ENCODE measurements at regions of chr6 and their contacts with region 1.

Region 1: DNA sequence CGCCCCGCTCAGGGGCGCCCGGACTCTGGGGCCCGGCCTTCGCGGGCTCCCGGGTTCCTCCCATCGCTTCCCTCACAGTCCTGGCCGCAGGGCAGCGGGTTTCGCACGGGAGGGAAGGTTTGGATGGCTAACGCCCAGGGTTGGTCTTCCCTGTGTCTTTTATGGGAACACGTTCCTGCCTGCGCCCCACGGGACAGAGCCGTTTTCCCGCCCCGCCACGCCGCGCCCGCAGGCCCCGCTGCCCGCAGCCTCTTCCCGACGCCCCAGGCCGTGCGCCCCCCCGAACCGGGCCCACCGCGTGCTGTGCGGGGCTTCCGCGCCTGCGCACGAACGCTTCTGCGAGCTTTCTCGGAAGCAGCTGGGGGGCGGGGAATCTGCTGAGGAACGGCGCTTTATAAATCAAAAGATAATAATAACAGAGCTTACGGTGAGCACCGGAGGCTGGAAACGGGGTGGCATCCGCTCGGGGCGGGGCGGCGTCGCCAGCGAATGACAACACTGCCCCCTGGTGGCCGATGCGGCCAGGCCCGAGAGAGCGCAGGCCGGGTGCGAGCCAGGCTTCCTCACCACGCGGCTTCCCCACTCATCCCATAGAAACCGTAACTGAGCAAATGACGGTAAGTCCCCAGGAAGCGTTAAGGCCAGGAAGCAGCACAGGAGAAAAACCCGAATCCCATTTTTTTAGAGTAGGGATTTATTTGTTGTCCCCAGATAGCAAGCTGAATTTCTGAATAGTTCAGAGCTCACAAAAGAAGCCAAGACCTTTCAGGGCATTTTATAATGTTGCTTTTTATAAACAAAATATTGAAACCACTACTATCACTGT is 116.4 kb downstream of the MYLK4 start:
- ATAC-seq: peak; percentile 92 to 99 (median 96)
- H3K4me3 ChIP-seq: peak overlapping the region; percentile 14 to 29 (median 16)
- H3K27ac ChIP-seq: no peak overlapping the region
- H3K4me1 ChIP-seq: peaks cover 0 to 4% of the 10 kb centered on the region in 2 donors

Region 2: DNA sequence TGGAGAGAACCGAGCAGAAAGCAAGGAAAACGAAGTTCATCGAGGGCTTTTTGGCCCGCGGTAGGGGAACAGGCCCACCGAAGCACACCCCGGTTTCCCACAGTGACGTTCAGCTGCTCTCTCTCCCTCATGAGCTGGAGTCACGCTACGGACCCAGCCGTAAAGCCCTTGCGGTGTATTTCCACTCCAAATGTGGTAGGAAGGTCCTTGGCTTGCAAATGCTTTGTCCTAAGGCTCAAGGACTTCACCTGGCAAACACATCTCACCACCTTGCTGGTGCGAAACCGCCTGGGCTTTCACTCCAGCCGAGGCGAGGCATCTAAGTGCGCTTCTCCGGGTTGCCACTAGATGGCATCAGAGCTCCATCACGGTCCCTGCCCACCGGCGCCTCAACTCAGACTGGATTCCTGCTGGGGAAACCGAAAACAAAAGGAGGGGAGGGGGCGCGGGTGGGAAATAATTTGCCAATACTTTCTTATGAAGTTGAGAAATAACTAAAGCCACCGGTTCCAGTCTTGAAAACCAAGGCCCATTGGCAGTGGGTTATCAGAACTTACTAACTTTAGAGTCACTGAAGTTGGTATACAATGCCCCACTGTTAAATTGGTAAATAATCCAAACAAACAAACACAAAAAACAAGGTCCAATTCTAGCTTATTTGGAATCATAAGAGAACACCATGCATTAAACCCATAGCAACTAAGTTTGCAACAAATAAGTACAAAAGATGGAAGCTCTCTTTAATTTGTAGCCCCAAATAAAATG is 1038.1 kb before region 1 on chr6:
- in situ Hi-C with region 1: loop called in 5 of 9 experiments (anchors 10 to 25 kb)
- ATAC-seq: peak; percentile 63 to 85 (median 80)
- H3K4me3 ChIP-seq: peak overlapping the region in 2 of 5 donors; percentile 19 to 28
- H3K27ac ChIP-seq: no peak overlapping the region
- H3K4me1 ChIP-seq: peaks cover 0 to 2% of the 10 kb centered on the region in 2 donors

Region 3: GRCh38 chr6:1609648-1610496 is 1024.5 kb before region 1 on chr6 and contains the start of gene FOXC1:
- in situ Hi-C with region 1: loop called in 2 of 9 experiments (anchors 10 to 25 kb)
- ATAC-seq: peak; percentile 54 to 81 (median 70)
- H3K4me3 ChIP-seq: peak within 1 kb of the TSS; percentile 14 to 42 (median 22)
- H3K27ac ChIP-seq: no peak within 1 kb of the TSS
- H3K4me1 ChIP-seq: peaks cover 2 to 25% of the 10 kb centered on the region in 2 donors
- total RNA-seq, gene FOXC1: 0.05 to 44.4 (median 1.0) TPM

Region 4: DNA sequence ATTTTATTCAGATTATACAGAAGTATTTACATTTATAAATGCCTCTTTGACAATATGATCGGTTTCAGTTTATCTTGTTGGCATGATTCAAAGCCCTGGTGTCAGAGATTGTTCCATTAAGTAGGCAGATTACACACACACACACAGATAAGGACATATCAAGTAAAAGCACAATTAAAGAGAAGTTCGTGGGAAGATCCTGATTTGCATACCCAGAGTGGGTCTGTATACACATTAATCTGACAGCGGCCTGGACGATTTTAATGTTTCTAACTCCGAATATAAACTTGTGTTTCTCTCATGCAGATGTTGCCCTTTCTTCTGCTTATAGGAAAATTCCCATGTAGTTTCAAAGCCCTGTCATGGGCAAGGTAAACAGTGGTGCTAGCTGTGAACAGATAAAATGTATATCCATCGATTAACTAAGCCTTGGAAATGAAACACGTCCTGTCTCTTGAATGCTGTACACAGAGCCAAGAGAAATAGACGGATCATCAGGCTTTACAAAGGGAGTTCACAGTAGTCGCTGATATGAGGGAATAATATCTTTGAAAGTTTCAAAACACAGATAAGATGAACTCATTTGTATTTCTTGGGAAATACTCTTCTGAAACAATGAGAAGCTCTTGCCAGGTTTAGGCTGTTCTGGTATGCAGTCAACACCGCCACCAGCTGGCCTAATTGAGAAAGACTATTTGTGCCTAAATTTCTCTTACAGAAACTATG is 280.8 kb before region 1 on chr6:
- in situ Hi-C with region 1: loop called in 1 of 9 experiments (anchors 25 kb)
- ATAC-seq: peak in 6 of 8 experiments; percentile 41 to 76 (median 60)
- H3K4me3 ChIP-seq: no peak overlapping the region
- H3K27ac ChIP-seq: no peak overlapping the region
- H3K4me1 ChIP-seq: peaks cover 0 to 3% of the 10 kb centered on the region in 2 donors

Region 5: DNA sequence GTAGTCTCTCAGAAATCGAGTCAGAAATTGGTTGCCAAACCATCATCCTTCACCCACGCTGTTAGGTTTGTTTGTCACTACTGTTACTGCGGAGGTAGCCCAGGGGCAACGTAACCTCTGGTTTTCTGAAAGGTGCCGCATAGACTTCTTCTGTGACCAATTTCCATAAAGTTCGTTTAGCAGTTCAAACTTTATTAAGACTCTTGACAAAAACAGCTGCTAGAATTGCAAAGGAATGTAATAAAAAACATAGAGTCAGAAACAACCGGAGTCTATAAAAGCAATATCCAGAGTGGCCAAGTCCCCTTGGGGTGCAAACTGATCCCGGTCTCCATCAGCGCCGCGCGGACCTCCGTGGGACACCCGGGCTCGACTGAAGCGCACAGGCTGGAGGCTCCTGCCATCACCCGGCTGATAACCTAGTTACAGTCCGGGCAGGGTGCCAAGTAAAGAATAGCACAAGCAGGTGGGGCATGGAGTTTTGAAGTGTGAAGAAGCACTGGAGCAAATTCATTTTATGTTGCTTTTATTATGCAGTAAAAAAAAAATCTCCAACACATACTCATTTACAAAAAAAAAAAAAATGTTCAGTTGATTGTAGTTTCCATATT is 183.9 kb before region 1 on chr6:
- in situ Hi-C with region 1: loop called in 1 of 9 experiments (anchors 25 kb)
- ATAC-seq: peak in 3 of 8 experiments; percentile 23 to 74 (median 37)
- H3K4me3 ChIP-seq: no peak overlapping the region
- H3K27ac ChIP-seq: no peak overlapping the region
- H3K4me1 ChIP-seq: no peaks in the 10 kb centered on the region

Measured in motor neuron (in vitro differentiated cells).